Dorsolateral prefrontal cortex (tissue), 120 donors: ENCODE measurements at regions of chr6 and their contacts with region 1.

Region 1: GRCh38 chr6:125477844-125478243 is 176.1 kb upstream of the HDDC2 start:
- DNase-seq: no peak
- H3K4me3 ChIP-seq: no peak overlapping the region
- H3K27ac ChIP-seq: no peak overlapping the region
- H3K27me3 ChIP-seq: peaks cover 0 to 6% (median 0%) of the 10 kb centered on the region in 45 donors
- CTCF ChIP-seq: no peak

Region 2: GRCh38 chr6:125434760-125435159 is 43.1 kb before region 1 on chr6:
- intact Hi-C with region 1: no loop called
- DNase-seq: no peak
- H3K4me3 ChIP-seq: no peak overlapping the region
- H3K27ac ChIP-seq: no peak overlapping the region
- H3K27me3 ChIP-seq: peaks cover 0 to 5% (median 0%) of the 10 kb centered on the region in 45 donors
- CTCF ChIP-seq: no peak

Region 3: DNA sequence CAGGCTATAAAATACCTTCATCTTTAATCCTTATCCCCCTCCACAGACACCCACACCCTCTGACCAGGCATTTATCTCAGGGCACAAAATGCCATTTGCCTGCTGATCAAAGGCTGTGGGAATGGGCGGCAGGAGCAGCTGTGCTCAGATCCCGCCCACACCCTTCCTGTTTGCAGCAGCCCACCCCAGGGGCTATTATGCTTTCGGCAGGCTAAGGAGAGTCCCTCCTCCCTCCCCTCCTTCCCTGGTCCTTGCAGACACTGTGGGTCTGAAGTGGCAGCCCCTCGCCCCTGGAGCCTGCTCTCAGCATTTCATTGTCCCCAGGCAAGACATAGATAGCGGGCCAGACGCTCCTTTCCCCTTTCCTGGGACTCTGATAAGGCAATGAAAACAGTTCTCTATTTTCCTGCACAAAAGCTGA is 50.8 kb after region 1 on chr6:
- intact Hi-C with region 1: loop called in 1 of 2 experiments (anchors 2 kb)
- DNase-seq: no peak
- H3K4me3 ChIP-seq: no peak overlapping the region
- H3K27ac ChIP-seq: no peak overlapping the region
- H3K27me3 ChIP-seq: peaks cover 0 to 11% (median 0%) of the 10 kb centered on the region in 45 donors
- CTCF ChIP-seq: no peak

Region 4: GRCh38 chr6:125611573-125612344 is 133.9 kb after region 1 on chr6:
- intact Hi-C with region 1: no loop called
- DNase-seq: peak in 1 of 10 donors; percentile 12
- H3K4me3 ChIP-seq: peak overlapping the region; percentile 8 to 65 (median 39)
- H3K27ac ChIP-seq: peak overlapping the region in 49 of 59 donors; percentile 2 to 80 (median 58)
- H3K27me3 ChIP-seq: no peaks in the 10 kb centered on the region
- CTCF ChIP-seq: no peak

Region 5: GRCh38 chr6:125631165-125631564 is 153.3 kb after region 1 on chr6:
- intact Hi-C with region 1: no loop called
- DNase-seq: no peak
- H3K4me3 ChIP-seq: no peak overlapping the region
- H3K27ac ChIP-seq: no peak overlapping the region
- H3K27me3 ChIP-seq: peaks cover 0 to 4% (median 0%) of the 10 kb centered on the region in 45 donors
- CTCF ChIP-seq: no peak

Region 6: GRCh38 chr6:125773387-125774341 is 295.8 kb after region 1 on chr6:
- intact Hi-C with region 1: no loop called
- DNase-seq: no peak
- H3K4me3 ChIP-seq: peak overlapping the region in 1 of 59 donors; percentile 5
- H3K27ac ChIP-seq: peak overlapping the region in 27 of 59 donors; percentile 2 to 67 (median 32)
- H3K27me3 ChIP-seq: no peaks in the 10 kb centered on the region
- CTCF ChIP-seq: peak in 2 of 56 donors; percentile 14 to 16